OCI-LY7 (cell line): ENCODE measurements at regions of chr15 and their contacts with region 1.

Region 1: DNA sequence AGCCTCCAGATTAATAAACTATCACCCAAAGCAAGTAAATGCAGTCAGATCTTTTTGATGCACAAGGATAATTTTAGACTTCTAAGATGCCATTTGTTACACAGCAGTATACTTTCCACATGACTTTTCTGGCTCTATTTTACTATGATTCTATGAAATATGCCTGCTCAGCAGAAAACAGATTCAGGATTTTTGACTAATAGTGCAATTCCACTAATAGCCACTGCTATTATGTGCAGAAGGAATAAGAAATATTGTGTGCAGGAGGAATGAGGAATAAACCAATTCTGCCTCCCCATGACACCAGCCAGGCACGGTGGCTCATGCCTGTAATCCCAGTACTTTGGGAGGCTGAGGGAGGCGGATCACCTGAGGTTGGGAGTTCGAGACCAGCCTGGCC is 11.5 kb upstream of the SPPL2A start:
- DNase-seq: no peak
- H3K4me3 ChIP-seq: no peak overlapping the region
- H3K27ac ChIP-seq: no peak overlapping the region
- H3K4me1 ChIP-seq: no peaks in the 10 kb centered on the region
- CTCF ChIP-seq: no peak

Region 2: GRCh38 chr15:50800715-50801114 is 23.7 kb after region 1 on chr15:
- CTCF ChIA-PET with region 1: no interaction called
- POLR2A ChIA-PET with region 1: no interaction called
- intact Hi-C with region 1: loop called (anchors 2 kb)
- DNase-seq: no peak
- H3K4me3 ChIP-seq: no peak overlapping the region
- H3K27ac ChIP-seq: no peak overlapping the region
- H3K4me1 ChIP-seq: peaks cover 7% of the 10 kb centered on the region
- CTCF ChIP-seq: no peak